ENCODE measurements at regions of chr12 and their contacts with region 1.

Region 1: DNA sequence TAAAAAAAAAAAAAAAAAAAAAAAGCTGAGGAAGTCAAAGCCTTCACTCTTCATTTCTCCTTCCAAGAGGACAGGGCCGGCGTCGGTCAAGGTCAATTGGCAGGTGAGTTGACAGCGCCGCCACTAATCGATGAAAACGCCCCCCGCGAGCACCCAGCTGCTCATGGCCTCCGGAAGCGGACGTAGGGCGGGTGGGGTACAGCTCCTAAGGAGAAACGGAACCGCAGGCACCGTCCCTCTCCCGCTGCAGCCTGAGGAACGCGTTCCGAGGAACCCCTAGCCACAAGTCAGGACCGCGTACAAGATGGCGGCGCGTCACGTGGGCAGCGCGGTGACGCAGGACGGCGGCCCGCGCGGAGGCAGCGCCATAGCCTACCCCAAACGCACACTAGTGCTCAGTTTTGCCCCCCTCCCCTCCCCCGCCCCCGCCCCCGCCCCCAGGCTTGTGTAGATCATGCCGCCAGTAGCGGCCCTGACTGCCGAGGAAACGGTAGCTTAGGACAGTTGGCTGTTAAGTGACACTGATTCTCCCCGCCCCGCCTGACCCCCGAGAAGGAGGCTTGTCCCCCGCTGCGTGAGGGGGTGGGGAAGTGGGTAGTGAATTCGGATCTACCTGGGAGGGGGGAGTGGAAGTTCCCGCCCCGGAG is at the start of gene ATF1:
- DNase-seq: peak; percentile 82 to 93
- ATAC-seq: peak; percentile 75 to 80
- H3K4me3 ChIP-seq: peak within 1 kb of the TSS; percentile 92 to 99 (median 98)
- H3K27ac ChIP-seq: peak within 1 kb of the TSS; percentile 97 to 100 (median 99)
- H3K4me1 ChIP-seq: peaks cover 28 to 42% of the 10 kb centered on the region in 2 donors
- H3K27me3 ChIP-seq: no peaks in the 10 kb centered on the region
- CTCF ChIP-seq: peak in 1 of 5 experiments; percentile 22
- POLR2A ChIP-seq: peak; percentile 83 to 90
- total RNA-seq, gene ATF1: 16.4 to 44.5 (median 37.5) TPM

Region 2: DNA sequence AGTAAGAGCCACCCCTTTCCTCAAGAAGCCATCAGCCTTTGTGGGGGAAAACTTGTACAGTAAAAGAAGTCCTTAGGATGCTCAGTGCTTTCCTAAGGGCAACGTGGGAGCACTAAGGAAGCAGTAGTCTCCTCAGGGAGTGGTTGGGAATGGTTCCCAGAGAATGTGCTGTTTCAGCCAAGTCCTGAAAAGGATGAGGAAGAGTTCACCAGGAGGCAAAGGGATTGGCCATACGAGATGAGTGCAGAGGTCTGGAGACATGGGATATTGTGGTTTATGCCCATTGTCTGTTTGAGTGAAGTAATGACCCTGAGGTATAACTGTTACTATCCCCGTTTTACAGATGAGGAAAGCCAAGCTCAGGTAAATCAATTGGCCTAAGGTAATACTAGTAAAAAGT is 85.9 kb before region 1 on chr12:
- in situ Hi-C with region 1: no loop called
- intact Hi-C with region 1: no loop called
- DNase-seq: no peak
- ATAC-seq: no peak
- H3K4me3 ChIP-seq: no peak overlapping the region
- H3K27ac ChIP-seq: no peak overlapping the region
- H3K4me1 ChIP-seq: no peaks in the 10 kb centered on the region
- H3K27me3 ChIP-seq: no peaks in the 10 kb centered on the region
- CTCF ChIP-seq: no peak
- POLR2A ChIP-seq: no peak

Region 3: DNA sequence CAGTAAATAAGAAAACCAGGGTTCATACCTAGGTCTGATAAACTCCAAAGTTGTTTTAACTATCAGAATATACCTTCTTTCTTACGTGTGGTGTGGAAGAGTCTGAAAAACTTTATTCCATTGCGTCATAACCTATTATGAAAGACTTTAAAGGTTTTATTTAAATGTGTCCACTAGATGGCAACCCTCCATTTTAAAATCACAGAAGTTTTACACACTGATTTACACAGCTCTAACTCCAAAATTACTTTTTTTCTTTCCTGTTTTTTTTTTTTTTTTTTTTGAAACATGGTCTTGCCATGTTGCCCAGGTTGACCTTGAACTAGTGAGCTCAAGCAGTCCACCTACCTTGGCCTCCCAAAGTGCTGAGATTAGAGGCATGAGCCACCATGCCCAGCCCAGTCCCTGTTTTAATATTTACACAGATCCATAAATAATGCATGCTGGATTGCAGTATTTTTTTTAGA is 61.6 kb after region 1 on chr12:
- in situ Hi-C with region 1: no loop called
- intact Hi-C with region 1: loop called (anchors 1 kb)
- DNase-seq: no peak
- ATAC-seq: peak; percentile 83 to 86
- H3K4me3 ChIP-seq: no peak overlapping the region
- H3K27ac ChIP-seq: peak overlapping the region; percentile 62 to 74 (median 70)
- H3K4me1 ChIP-seq: peaks cover 0 to 14% of the 10 kb centered on the region in 2 donors
- H3K27me3 ChIP-seq: no peaks in the 10 kb centered on the region
- CTCF ChIP-seq: peak; percentile 53 to 86 (median 66)
- POLR2A ChIP-seq: no peak

Region 4: GRCh38 chr12:51025836-51026638 is 262.3 kb after region 1 on chr12 and contains the start of gene SLC11A2:
- in situ Hi-C with region 1: no loop called
- intact Hi-C with region 1: loop called (anchors 2 kb)
- DNase-seq: peak; percentile 97 to 98
- ATAC-seq: peak; percentile 74
- H3K4me3 ChIP-seq: peak within 1 kb of the TSS; percentile 72 to 97 (median 90)
- H3K27ac ChIP-seq: peak within 1 kb of the TSS; percentile 93 to 100 (median 97)
- H3K4me1 ChIP-seq: peaks cover 27 to 33% of the 10 kb centered on the region in 2 donors
- H3K27me3 ChIP-seq: no peaks in the 10 kb centered on the region
- CTCF ChIP-seq: peak in 2 of 5 experiments; percentile 6 to 27
- POLR2A ChIP-seq: peak; percentile 79 to 88
- total RNA-seq, gene SLC11A2: 24.0 to 65.4 (median 47.0) TPM

Region 5: DNA sequence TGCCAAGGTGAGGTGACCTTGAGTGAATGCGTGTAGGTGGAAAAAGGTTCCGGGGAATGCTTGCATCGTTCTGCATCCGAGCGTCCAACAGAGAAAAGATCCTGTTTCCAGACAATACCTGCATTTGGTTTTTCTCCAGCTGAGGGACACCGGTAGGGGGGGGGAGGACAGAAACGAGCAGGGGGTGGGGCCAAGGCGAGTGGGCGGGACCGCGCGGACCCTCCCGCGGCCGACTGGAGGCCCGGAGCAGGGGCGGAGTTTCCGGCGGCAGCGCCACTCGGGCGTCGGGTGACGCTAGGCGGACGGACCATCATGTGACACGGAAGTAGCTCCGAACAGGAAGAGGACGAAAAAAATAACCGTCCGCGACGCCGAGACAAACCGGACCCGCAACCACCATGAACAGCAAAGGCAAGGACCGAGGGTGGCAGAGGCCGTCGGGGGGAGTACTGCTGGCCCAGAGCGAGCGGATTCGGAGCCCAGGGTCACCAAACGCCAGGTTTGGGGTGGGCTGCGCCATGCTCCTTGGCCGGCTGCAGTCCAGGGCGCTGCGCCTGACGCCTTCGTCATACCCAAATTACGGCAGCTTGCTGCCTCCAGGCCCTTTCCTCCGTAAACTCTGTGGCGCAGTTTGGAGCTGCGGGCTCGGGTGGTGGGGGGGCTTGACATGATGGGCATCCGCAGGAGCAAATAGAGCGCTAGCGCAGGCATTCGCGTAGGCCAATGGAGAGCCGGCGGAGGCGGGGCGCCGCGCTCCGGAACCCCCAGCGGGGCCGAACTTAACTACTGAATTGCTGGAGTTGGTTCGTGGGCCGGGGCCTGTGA is 475.0 kb after region 1 on chr12 and contains the start of gene DAZAP2:
- in situ Hi-C with region 1: no loop called
- intact Hi-C with region 1: loop called (anchors 10 kb)
- DNase-seq: peak; percentile 94 to 97
- ATAC-seq: peak; percentile 94 to 96
- H3K4me3 ChIP-seq: peak within 1 kb of the TSS; percentile 94 to 100 (median 97)
- H3K27ac ChIP-seq: peak within 1 kb of the TSS; percentile 98 to 100 (median 100)
- H3K4me1 ChIP-seq: peaks cover 19 to 26% of the 10 kb centered on the region in 2 donors
- H3K27me3 ChIP-seq: no peaks in the 10 kb centered on the region
- CTCF ChIP-seq: peak; percentile 6 to 49 (median 17)
- POLR2A ChIP-seq: peak; percentile 92 to 98
- total RNA-seq, gene DAZAP2: 204 to 274 (median 246) TPM